Activated B cell treated with CpG ODN at 0.5 μM for 24 hours (primary cell): ENCODE measurements at regions of chr4 and their contacts with region 1.

Region 1: DNA sequence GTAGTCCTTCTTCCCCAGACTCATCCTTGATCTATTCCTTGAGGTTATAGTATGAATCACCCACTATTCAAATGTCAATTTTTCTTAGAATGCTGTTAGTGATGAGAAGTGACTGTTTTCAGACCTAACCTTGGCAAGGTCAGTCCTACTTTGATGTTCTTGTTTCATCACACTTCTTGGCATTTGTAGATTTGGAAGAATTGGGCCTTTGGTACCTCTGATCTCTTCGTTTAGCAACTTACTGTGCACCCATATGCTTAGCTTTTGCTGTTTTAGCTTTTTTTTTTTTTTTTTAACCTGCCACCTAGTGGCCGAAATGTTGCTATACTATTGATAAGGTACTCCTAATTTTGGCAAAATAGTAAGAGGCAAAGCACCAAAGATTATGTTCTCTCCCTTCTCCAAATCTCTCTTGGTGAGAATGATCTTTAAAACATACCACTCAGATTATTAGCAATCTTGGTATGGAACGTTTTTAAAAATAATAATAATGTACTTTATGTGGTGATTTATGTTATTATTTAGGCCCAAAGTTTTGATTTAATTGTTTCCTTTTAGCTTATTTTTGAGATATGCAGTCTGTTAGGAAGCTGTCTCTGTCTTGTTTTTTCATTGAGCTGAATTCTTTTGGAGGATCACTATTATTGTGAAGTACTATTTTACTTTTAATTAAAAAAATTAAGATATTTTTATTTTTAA is 16.6 kb downstream of the DCK start:
- DNase-seq: no peak
- ATAC-seq: peak; percentile 46
- H3K4me3 Mint-ChIP-seq: peak overlapping the region; percentile 2
- H3K27ac Mint-ChIP-seq: peak overlapping the region; percentile 64
- H3K4me1 Mint-ChIP-seq: peaks cover 65% of the 10 kb centered on the region
- H3K27me3 Mint-ChIP-seq: no peaks in the 10 kb centered on the region
- CTCF ChIP-seq: peak; percentile 56

Region 2: GRCh38 chr4:70943114-70943513 is 66.9 kb before region 1 on chr4:
- CTCF ChIA-PET with region 1: no interaction called
- POLR2A ChIA-PET with region 1: no interaction called
- intact Hi-C with region 1: loop called (anchors 5 kb)
- DNase-seq: no peak
- ATAC-seq: peak; percentile 78
- H3K4me3 Mint-ChIP-seq: no peak overlapping the region
- H3K27ac Mint-ChIP-seq: peak overlapping the region; percentile 59
- H3K4me1 Mint-ChIP-seq: peaks cover 37% of the 10 kb centered on the region
- H3K27me3 Mint-ChIP-seq: no peaks in the 10 kb centered on the region
- CTCF ChIP-seq: no peak

Region 3: DNA sequence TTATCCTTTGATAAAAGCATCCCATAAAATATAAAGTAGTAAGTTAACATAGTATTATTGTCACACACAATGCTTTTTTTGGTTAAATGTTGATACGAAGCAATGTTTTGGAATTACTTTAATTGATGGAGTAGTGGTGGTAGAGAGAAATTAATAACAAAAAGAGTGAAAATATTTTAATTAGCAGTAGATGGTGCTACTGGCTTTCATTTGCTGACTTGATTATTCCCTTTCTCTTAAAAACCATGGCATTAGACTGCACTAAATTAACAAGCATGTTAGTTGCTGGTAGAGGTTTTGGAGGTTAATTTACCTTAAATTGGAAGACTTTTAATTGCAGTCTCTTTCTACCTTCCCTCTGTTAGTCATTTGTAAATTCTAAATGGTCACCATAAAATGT is 25.4 kb before region 1 on chr4:
- CTCF ChIA-PET with region 1: interaction called, 14 read pairs
- POLR2A ChIA-PET with region 1: no interaction called
- intact Hi-C with region 1: loop called (anchors 1 kb)
- DNase-seq: no peak
- ATAC-seq: no peak
- H3K4me3 Mint-ChIP-seq: no peak overlapping the region
- H3K27ac Mint-ChIP-seq: no peak overlapping the region
- H3K4me1 Mint-ChIP-seq: peaks cover 9% of the 10 kb centered on the region
- H3K27me3 Mint-ChIP-seq: no peaks in the 10 kb centered on the region
- CTCF ChIP-seq: no peak

Region 4: GRCh38 chr4:71026086-71026485 is 16.0 kb after region 1 on chr4:
- CTCF ChIA-PET with region 1: interaction called, 17 read pairs
- POLR2A ChIA-PET with region 1: no interaction called
- intact Hi-C with region 1: no loop called
- DNase-seq: no peak
- ATAC-seq: no peak
- H3K4me3 Mint-ChIP-seq: no peak overlapping the region
- H3K27ac Mint-ChIP-seq: peak overlapping the region; percentile 21
- H3K4me1 Mint-ChIP-seq: peaks cover 3% of the 10 kb centered on the region
- H3K27me3 Mint-ChIP-seq: no peaks in the 10 kb centered on the region
- CTCF ChIP-seq: no peak

Region 5: GRCh38 chr4:71052716-71053115 is 42.7 kb after region 1 on chr4:
- CTCF ChIA-PET with region 1: no interaction called
- POLR2A ChIA-PET with region 1: no interaction called
- intact Hi-C with region 1: no loop called
- DNase-seq: no peak
- ATAC-seq: no peak
- H3K4me3 Mint-ChIP-seq: no peak overlapping the region
- H3K27ac Mint-ChIP-seq: no peak overlapping the region
- H3K4me1 Mint-ChIP-seq: no peaks in the 10 kb centered on the region
- H3K27me3 Mint-ChIP-seq: no peaks in the 10 kb centered on the region
- CTCF ChIP-seq: no peak